Caco-2 (cell line): ENCODE measurements at regions of chr2 and their contacts with region 1.

Region 1: DNA sequence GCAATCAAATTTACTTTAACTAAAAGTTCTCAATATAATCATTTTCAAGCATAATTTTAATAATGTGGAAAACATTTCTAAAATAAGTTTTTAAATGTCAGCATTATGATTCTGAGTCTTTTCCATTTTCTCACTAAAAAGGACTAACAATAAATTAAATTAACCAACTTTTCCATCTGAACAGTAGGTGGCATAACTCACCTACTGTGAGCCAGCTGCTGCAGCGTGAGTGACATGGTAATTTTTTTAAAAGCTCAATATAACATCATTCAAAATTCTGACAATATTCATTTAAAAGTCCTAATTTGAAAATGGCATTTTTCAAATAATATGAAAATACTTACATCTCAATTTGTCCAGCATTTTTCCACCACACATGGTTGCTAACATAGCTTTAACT is 66.5 kb downstream of the DTNB start:
- DNase-seq: no peak
- H3K4me3 ChIP-seq: no peak overlapping the region
- H3K4me3 Mint-ChIP-seq: no peak overlapping the region
- H3K27ac Mint-ChIP-seq: no peak overlapping the region
- H3K4me1 ChIP-seq: peaks cover 49% of the 10 kb centered on the region
- H3K4me1 Mint-ChIP-seq: peaks cover 30% of the 10 kb centered on the region
- H3K27me3 ChIP-seq: no peaks in the 10 kb centered on the region
- H3K27me3 Mint-ChIP-seq: no peaks in the 10 kb centered on the region
- CTCF ChIP-seq: peak; percentile 69 to 84

Region 2: GRCh38 chr2:25639171-25639570 is 32.3 kb after region 1 on chr2:
- CTCF ChIA-PET with region 1: interaction called, 3 read pairs
- POLR2A ChIA-PET with region 1: interaction called, 3 read pairs
- intact Hi-C with region 1: loop called (anchors 1 kb)
- DNase-seq: no peak
- H3K4me3 ChIP-seq: no peak overlapping the region
- H3K4me3 Mint-ChIP-seq: no peak overlapping the region
- H3K27ac Mint-ChIP-seq: no peak overlapping the region
- H3K4me1 ChIP-seq: peaks cover 18% of the 10 kb centered on the region
- H3K4me1 Mint-ChIP-seq: peaks cover 21% of the 10 kb centered on the region
- H3K27me3 ChIP-seq: no peaks in the 10 kb centered on the region
- H3K27me3 Mint-ChIP-seq: no peaks in the 10 kb centered on the region
- CTCF ChIP-seq: no peak

Region 3: GRCh38 chr2:25664183-25664964 is 57.5 kb after region 1 on chr2:
- CTCF ChIA-PET with region 1: interaction called, 136 read pairs
- POLR2A ChIA-PET with region 1: interaction called, 4 read pairs
- intact Hi-C with region 1: loop called (anchors 1 kb)
- DNase-seq: peak; percentile 74 to 83
- H3K4me3 ChIP-seq: no peak overlapping the region
- H3K4me3 Mint-ChIP-seq: no peak overlapping the region
- H3K27ac Mint-ChIP-seq: peak overlapping the region; percentile 21
- H3K4me1 ChIP-seq: peaks cover 12% of the 10 kb centered on the region; the same call in 1 of the 2 replicates
- H3K4me1 Mint-ChIP-seq: peaks cover 39% of the 10 kb centered on the region
- H3K27me3 ChIP-seq: no peaks in the 10 kb centered on the region
- H3K27me3 Mint-ChIP-seq: no peaks in the 10 kb centered on the region
- CTCF ChIP-seq: peak; percentile 81 to 88

Region 4: DNA sequence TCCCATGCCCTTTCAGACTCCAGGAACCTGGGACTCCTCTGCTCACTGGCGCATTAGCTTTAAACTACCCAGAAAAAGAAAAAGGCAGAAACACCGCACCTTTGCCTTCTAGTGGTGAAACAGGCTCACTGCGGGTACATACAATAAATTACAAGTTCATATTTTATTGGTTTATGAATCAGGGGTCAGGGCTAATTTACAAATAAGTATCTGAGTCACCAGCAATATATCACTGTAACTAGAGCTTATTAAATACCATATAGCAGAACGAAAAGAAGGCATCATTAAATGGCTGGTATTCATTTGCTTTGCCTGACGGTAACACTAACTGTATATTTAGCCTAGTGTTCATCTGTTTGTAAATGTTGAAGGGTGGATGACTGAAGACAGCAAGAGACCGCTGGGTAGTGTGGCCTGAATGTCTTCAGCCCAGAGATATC is 93.3 kb after region 1 on chr2:
- CTCF ChIA-PET with region 1: interaction called, 74 read pairs
- POLR2A ChIA-PET with region 1: no interaction called
- intact Hi-C with region 1: loop called (anchors 1 kb)
- DNase-seq: peak; percentile 56 to 64
- H3K4me3 ChIP-seq: no peak overlapping the region
- H3K4me3 Mint-ChIP-seq: no peak overlapping the region
- H3K27ac Mint-ChIP-seq: no peak overlapping the region
- H3K4me1 ChIP-seq: no peaks in the 10 kb centered on the region
- H3K4me1 Mint-ChIP-seq: no peaks in the 10 kb centered on the region
- H3K27me3 ChIP-seq: no peaks in the 10 kb centered on the region
- H3K27me3 Mint-ChIP-seq: no peaks in the 10 kb centered on the region
- CTCF ChIP-seq: peak; percentile 71 to 82

Region 5: GRCh38 chr2:25851740-25852503 is 245.0 kb after region 1 on chr2:
- CTCF ChIA-PET with region 1: interaction called, 4 read pairs
- POLR2A ChIA-PET with region 1: no interaction called
- intact Hi-C with region 1: loop called (anchors 5 kb)
- DNase-seq: peak in 1 of 2 experiments; percentile 56
- H3K4me3 ChIP-seq: no peak overlapping the region
- H3K4me3 Mint-ChIP-seq: no peak overlapping the region
- H3K27ac Mint-ChIP-seq: no peak overlapping the region
- H3K4me1 ChIP-seq: no peaks in the 10 kb centered on the region; the same call in 1 of the 2 replicates
- H3K4me1 Mint-ChIP-seq: peaks cover 7% of the 10 kb centered on the region
- H3K27me3 ChIP-seq: no peaks in the 10 kb centered on the region
- H3K27me3 Mint-ChIP-seq: no peaks in the 10 kb centered on the region
- CTCF ChIP-seq: peak; percentile 69 to 70